WTC11 (cell line): ENCODE measurements at regions of chrX and their contacts with region 1.

Region 1: GRCh38 chrX:41003506-41004270 is 81.6 kb upstream of the USP9X start:
- DNase-seq: no peak
- ATAC-seq: no peak
- H3K4me3 Mint-ChIP-seq: no peak overlapping the region
- H3K27ac Mint-ChIP-seq: no peak overlapping the region
- H3K4me1 Mint-ChIP-seq: peaks cover 20% of the 10 kb centered on the region
- H3K27me3 Mint-ChIP-seq: no peaks in the 10 kb centered on the region
- CTCF ChIP-seq: no peak

Region 2: GRCh38 chrX:40683245-40683644 is 320.4 kb before region 1 on chrX:
- CTCF ChIA-PET with region 1: no interaction called
- POLR2A ChIA-PET with region 1: no interaction called
- DNase-seq: no peak
- ATAC-seq: no peak
- H3K4me3 Mint-ChIP-seq: no peak overlapping the region
- H3K27ac Mint-ChIP-seq: no peak overlapping the region
- H3K4me1 Mint-ChIP-seq: peaks cover 6% of the 10 kb centered on the region; the same call in 1 of the 2 replicates
- H3K27me3 Mint-ChIP-seq: no peaks in the 10 kb centered on the region
- CTCF ChIP-seq: no peak

Region 3: GRCh38 chrX:41164449-41164848 is 160.8 kb after region 1 on chrX:
- CTCF ChIA-PET with region 1: no interaction called
- POLR2A ChIA-PET with region 1: no interaction called
- DNase-seq: no peak
- ATAC-seq: no peak
- H3K4me3 Mint-ChIP-seq: no peak overlapping the region
- H3K27ac Mint-ChIP-seq: no peak overlapping the region
- H3K4me1 Mint-ChIP-seq: no peaks in the 10 kb centered on the region
- H3K27me3 Mint-ChIP-seq: no peaks in the 10 kb centered on the region
- CTCF ChIP-seq: no peak

Region 4: GRCh38 chrX:41352329-41352838 is 348.7 kb after region 1 on chrX:
- CTCF ChIA-PET with region 1: no interaction called
- POLR2A ChIA-PET with region 1: interaction called, 10 read pairs
- DNase-seq: no peak
- ATAC-seq: peak; percentile 27
- H3K4me3 Mint-ChIP-seq: no peak overlapping the region
- H3K27ac Mint-ChIP-seq: peak overlapping the region; percentile 42; the same call in 1 of the 2 replicates
- H3K4me1 Mint-ChIP-seq: peaks cover 18% of the 10 kb centered on the region
- H3K27me3 Mint-ChIP-seq: no peaks in the 10 kb centered on the region
- CTCF ChIP-seq: no peak